CD8-positive, alpha-beta T cell (primary cell): ENCODE measurements at regions of chr7 and their contacts with region 1.

Region 1: DNA sequence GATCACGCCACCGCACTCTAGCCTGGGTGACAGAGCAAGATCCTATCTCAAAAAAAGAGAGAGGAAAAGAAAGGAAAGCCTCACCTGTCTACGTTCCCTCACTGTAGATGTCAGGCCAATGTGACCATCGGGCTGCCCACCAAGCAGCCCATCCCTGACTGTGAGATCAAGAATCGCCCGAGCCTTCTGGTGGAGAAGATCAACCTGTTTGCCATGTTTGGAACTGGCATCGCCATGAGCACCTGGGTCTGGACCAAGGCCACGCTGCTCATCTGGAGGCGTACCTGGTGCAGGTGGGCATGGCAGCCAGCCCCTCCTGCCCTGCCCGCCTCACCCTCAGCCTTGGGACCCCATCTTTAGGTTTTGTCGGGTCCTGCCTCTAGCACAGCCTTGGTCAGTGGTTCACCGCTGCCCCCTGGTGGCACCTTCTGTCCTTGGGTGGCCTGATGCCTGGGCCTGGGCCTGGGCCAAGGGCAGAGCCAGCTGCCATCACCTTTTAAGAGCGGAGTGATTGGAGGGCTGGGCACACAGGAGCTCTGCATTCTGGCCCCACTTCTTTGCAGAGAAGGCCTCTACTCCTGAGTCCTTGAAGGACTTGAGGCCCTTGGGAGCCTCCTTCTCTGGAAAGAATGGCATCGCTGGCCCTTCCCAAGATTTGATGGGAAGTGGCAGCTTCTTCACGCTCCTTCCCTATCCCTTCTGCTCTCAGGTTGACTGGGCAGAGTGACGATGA is 14.4 kb upstream of the AHCYL2 start:
- DNase-seq: peak; percentile 39 to 78 (median 64)
- ATAC-seq: peak; percentile 69
- H3K4me3 ChIP-seq: no peak overlapping the region
- H3K4me3 Mint-ChIP-seq: no peak overlapping the region
- H3K27ac ChIP-seq: no peak overlapping the region
- H3K27ac Mint-ChIP-seq: no peak overlapping the region
- H3K4me1 ChIP-seq: no peaks in the 10 kb centered on the region
- H3K4me1 Mint-ChIP-seq: peaks cover 3% of the 10 kb centered on the region
- H3K27me3 ChIP-seq: no peaks in the 10 kb centered on the region
- H3K27me3 Mint-ChIP-seq: peaks cover 4% of the 10 kb centered on the region
- CTCF ChIP-seq: peak; percentile 45

Region 2: DNA sequence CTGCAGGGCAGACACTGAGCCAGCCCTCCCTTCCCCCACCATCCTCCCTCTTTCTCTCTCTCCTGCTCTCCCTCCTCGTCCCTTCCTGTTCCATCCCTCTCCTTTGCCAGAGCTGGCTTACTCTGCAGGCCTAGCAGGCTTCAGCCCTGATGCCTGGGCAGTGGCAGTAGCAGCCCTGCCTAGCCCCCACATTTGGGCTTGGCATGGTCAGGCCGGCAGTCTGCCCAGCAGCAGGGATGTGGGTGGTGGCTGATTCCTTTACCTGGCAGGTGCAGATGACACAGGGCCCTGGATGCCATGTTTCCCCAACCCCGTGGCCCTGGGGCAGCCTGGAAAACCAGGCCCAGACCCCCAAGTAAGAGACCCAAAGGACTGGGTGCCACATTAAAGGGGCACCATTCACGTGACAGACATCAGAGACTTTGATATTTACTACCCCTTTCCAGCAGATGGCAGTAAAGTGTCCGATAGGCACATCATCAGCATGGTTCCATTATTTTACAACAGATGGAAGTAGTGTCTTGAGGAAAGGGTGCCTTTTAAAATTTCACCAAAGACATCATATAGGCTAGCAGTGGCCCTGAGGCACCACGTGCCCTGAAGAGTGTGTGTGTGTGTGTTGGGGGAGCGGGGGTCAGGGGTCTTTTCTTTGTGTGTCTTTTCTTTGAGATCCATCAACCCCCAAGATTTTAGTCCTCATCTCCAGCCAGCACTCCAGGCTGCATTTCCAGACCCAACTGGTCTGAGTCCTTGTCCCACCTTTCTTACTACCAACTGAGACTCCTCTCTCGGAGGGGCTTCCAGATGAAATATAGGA is 305.8 kb before region 1 on chr7:
- CTCF ChIA-PET with region 1: no interaction called
- POLR2A ChIA-PET with region 1: no interaction called
- intact Hi-C with region 1: loop called in 1 of 2 experiments (anchors 5 kb)
- DNase-seq: peak in 3 of 9 experiments; percentile 21 to 79 (median 70)
- ATAC-seq: peak; percentile 81
- H3K4me3 ChIP-seq: no peak overlapping the region
- H3K4me3 Mint-ChIP-seq: no peak overlapping the region
- H3K27ac ChIP-seq: no peak overlapping the region
- H3K27ac Mint-ChIP-seq: no peak overlapping the region
- H3K4me1 ChIP-seq: no peaks in the 10 kb centered on the region
- H3K4me1 Mint-ChIP-seq: no peaks in the 10 kb centered on the region
- H3K27me3 ChIP-seq: peaks cover under 1 to 1% of the 10 kb centered on the region in 2 experiments
- H3K27me3 Mint-ChIP-seq: peaks cover 38% of the 10 kb centered on the region
- CTCF ChIP-seq: peak; percentile 60

Region 3: GRCh38 chr7:129163875-129164544 is 46.4 kb before region 1 on chr7:
- CTCF ChIA-PET with region 1: interaction called, 71 read pairs
- POLR2A ChIA-PET with region 1: no interaction called
- intact Hi-C with region 1: loop called (anchors 1 kb)
- DNase-seq: peak in 3 of 9 experiments; percentile 18 to 69 (median 61)
- ATAC-seq: peak; percentile 54
- H3K4me3 ChIP-seq: no peak overlapping the region
- H3K4me3 Mint-ChIP-seq: no peak overlapping the region
- H3K27ac ChIP-seq: no peak overlapping the region
- H3K27ac Mint-ChIP-seq: no peak overlapping the region
- H3K4me1 ChIP-seq: peaks cover 4% of the 10 kb centered on the region
- H3K4me1 Mint-ChIP-seq: peaks cover 7% of the 10 kb centered on the region
- H3K27me3 ChIP-seq: no peaks in the 10 kb centered on the region
- H3K27me3 Mint-ChIP-seq: no peaks in the 10 kb centered on the region
- CTCF ChIP-seq: peak; percentile 86

Region 4: GRCh38 chr7:129298268-129298893 is 88.0 kb after region 1 on chr7:
- CTCF ChIA-PET with region 1: interaction called, 14 read pairs
- POLR2A ChIA-PET with region 1: no interaction called
- intact Hi-C with region 1: no loop called
- DNase-seq: peak in 8 of 9 experiments; percentile 19 to 63 (median 54)
- ATAC-seq: no peak
- H3K4me3 ChIP-seq: no peak overlapping the region
- H3K4me3 Mint-ChIP-seq: no peak overlapping the region
- H3K27ac ChIP-seq: no peak overlapping the region
- H3K27ac Mint-ChIP-seq: no peak overlapping the region
- H3K4me1 ChIP-seq: no peaks in the 10 kb centered on the region
- H3K4me1 Mint-ChIP-seq: no peaks in the 10 kb centered on the region
- H3K27me3 ChIP-seq: no peaks in the 10 kb centered on the region
- H3K27me3 Mint-ChIP-seq: no peaks in the 10 kb centered on the region
- CTCF ChIP-seq: peak; percentile 70